MCF 10A (cell line): ENCODE measurements at regions of chr2 and their contacts with region 1.

Region 1: GRCh38 chr2:219498280-219499057 is at the start of gene GMPPA:
- DNase-seq: peak; percentile 99
- H3K4me3 Mint-ChIP-seq: peak within 1 kb of the TSS; percentile 92
- H3K27ac Mint-ChIP-seq: peak within 1 kb of the TSS; percentile 93
- H3K4me1 Mint-ChIP-seq: peaks cover 24% of the 10 kb centered on the region
- H3K27me3 Mint-ChIP-seq: no peaks in the 10 kb centered on the region
- CTCF ChIP-seq: no peak
- total RNA-seq, gene GMPPA: 70.7 and 80.2 TPM in 2 replicates

Region 2: GRCh38 chr2:219430633-219431615 is 67.5 kb before region 1 on chr2:
- CTCF ChIA-PET with region 1: interaction called, 4 read pairs
- POLR2A ChIA-PET with region 1: interaction called, 3 read pairs
- intact Hi-C with region 1: loop called (anchors 2 kb)
- DNase-seq: peak; percentile 60
- H3K4me3 Mint-ChIP-seq: no peak overlapping the region
- H3K27ac Mint-ChIP-seq: no peak overlapping the region
- H3K4me1 Mint-ChIP-seq: no peaks in the 10 kb centered on the region
- H3K27me3 Mint-ChIP-seq: peaks cover 5% of the 10 kb centered on the region
- CTCF ChIP-seq: peak; percentile 27

Region 3: DNA sequence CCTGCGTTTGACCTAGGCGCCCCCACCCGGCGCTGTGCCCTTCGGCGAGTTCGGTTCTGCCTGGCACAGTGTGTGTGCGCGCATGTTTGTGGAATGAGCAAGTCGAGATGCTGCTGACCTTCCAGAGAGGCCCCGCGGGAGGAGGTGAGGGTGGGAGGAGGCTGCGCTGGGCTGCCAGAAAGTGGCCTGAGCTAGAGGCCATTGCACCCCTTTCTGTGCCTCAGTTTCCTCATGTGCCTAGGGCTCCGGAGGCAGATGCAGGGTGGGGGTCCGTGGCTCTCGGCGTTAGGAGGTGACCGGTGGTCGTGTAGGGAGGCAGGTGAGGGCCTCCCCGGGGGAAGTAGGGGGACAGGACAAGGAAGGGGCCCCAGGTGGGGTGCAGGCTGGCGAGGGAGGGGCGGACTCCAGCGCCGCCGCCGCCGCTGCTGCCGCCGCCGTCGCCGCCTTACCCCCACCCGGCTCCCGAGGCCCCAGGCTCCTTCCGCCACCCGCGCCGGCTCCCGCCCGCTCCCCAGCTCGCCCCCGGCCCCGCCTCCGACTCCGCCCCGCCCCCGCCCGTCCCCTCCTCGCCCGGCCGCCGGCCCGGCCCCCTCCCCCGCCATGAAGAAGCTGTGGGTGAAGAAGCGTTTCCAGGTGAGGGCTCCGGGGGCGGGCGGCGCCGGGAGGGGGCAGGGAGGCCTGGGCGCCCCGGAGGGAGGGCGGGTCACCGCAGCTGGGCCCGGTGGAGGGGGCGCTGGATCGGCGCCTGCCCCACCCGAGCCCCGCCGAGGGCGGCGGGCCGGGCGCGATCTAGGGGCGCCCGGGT is 56.8 kb before region 1 on chr2:
- CTCF ChIA-PET with region 1: interaction called, 3 read pairs
- POLR2A ChIA-PET with region 1: interaction called, 12 read pairs
- intact Hi-C with region 1: no loop called
- DNase-seq: peak; percentile 48
- H3K4me3 Mint-ChIP-seq: peak overlapping the region; percentile 83
- H3K27ac Mint-ChIP-seq: no peak overlapping the region
- H3K4me1 Mint-ChIP-seq: peaks cover 35% of the 10 kb centered on the region
- H3K27me3 Mint-ChIP-seq: no peaks in the 10 kb centered on the region
- CTCF ChIP-seq: no peak

Region 4: DNA sequence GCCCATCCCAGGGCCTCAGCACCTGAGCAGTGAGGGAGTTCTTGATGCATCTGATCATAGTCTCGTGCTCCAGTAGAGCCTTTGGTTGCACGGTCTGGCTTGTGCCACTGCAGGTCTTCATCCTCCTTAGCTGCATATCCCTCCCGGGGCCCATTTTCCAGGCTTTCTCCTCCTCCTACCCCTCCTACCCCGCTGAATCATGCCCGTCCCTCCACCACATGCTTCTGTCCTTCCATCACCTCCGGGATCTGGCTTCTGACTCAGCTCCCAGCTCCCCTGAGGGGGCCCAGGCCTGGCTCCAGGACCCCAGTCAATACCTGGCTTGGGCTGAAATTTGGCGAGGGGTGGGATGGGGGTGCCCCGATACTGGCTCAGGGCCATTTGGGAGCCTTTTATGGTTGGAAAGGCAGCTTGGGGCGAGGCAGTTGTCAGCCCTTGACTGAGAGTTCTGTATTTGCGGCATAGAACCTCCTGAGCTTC is 45.6 kb before region 1 on chr2:
- CTCF ChIA-PET with region 1: interaction called, 3 read pairs
- POLR2A ChIA-PET with region 1: interaction called, 17 read pairs
- intact Hi-C with region 1: loop called (anchors 2 kb)
- DNase-seq: peak; percentile 99
- H3K4me3 Mint-ChIP-seq: peak overlapping the region; percentile 64
- H3K27ac Mint-ChIP-seq: peak overlapping the region; percentile 83
- H3K4me1 Mint-ChIP-seq: peaks cover 26% of the 10 kb centered on the region
- H3K27me3 Mint-ChIP-seq: no peaks in the 10 kb centered on the region
- CTCF ChIP-seq: no peak

Region 5: DNA sequence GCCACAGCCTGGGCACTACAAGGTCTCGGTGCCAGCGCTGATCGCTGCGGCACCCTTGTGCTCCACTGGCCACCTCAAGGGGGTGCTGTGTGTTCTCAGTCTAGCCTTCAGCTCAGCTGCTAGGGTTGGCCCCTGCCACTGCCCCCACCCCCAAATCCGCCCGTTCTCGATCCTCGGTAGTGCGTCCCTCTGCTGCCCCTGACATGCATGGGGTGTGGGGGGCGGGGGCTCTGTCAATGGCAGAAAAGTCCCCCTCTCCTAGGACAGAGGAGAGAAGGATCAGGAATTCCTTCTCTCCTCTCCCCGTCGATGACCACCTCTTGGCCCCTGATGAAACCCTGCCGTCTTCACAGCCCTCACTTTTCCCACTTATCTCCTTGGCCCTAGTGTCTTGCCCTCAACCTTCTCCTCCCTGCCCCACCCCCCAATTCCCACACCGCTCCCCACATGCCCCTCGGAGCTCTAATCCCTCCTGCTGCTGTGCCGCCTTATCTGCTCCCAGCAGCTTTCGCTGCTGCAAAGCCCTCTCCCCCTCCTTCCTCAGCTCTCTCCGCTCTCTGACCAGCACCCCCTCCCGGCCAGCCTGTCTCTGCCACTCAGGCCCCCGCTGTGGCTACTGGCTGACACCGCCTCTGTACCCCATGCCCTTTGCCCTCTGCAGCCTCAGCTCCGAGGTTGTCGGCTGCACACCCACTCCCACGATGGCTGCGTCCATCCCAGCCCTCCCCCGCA is 11.5 kb after region 1 on chr2:
- CTCF ChIA-PET with region 1: interaction called, 12 read pairs
- POLR2A ChIA-PET with region 1: interaction called, 7 read pairs
- intact Hi-C with region 1: no loop called
- DNase-seq: peak; percentile 60
- H3K4me3 Mint-ChIP-seq: peak overlapping the region; percentile 38
- H3K27ac Mint-ChIP-seq: no peak overlapping the region
- H3K4me1 Mint-ChIP-seq: peaks cover 11% of the 10 kb centered on the region
- H3K27me3 Mint-ChIP-seq: peaks cover 53% of the 10 kb centered on the region
- CTCF ChIP-seq: peak; percentile 61

Region 6: DNA sequence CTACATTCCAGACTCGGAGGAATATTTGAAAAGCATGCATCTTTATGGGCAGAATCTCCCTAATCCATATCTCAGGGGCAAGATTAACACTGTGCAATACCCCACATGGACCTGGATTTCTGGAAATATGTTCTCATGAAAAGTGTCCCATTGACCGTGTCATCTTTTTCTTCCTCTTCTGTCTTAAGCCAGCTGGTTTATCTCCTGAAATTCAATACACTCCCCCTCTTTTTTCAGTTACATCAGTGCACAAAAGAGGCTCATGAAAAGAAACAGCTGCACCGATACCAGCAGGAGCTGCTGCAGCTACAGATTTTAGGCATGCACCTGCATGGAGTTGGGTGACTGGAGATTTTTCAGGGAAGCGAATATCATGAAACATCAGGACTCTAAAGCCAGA is 246.1 kb after region 1 on chr2:
- CTCF ChIA-PET with region 1: no interaction called
- POLR2A ChIA-PET with region 1: no interaction called
- intact Hi-C with region 1: no loop called
- DNase-seq: no peak
- H3K4me3 Mint-ChIP-seq: no peak overlapping the region
- H3K27ac Mint-ChIP-seq: no peak overlapping the region
- H3K4me1 Mint-ChIP-seq: no peaks in the 10 kb centered on the region
- H3K27me3 Mint-ChIP-seq: no peaks in the 10 kb centered on the region
- CTCF ChIP-seq: no peak

Region 7: DNA sequence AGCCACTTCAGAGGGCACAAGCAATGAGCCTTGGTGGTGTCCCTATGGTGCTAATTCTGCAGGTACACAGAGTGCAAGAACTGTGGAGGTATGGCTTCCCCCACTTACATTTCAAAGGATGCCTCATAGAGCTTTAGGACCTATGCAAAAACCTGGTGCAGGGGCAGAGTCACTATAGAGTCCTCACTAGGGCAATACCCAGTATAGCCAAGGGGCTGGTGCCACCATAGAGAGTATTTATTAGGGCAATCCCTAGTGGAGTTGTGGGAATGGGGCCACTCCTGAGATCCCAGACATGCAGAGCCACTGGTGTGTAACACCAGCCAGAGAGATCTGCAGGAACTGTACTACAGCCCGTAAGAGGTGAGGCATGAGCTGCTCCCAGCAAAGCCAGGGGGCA is 441.2 kb after region 1 on chr2:
- CTCF ChIA-PET with region 1: no interaction called
- POLR2A ChIA-PET with region 1: no interaction called
- intact Hi-C with region 1: no loop called
- DNase-seq: no peak
- H3K4me3 Mint-ChIP-seq: no peak overlapping the region
- H3K27ac Mint-ChIP-seq: no peak overlapping the region
- H3K4me1 Mint-ChIP-seq: no peaks in the 10 kb centered on the region
- H3K27me3 Mint-ChIP-seq: no peaks in the 10 kb centered on the region
- CTCF ChIP-seq: no peak